Activated CD4-positive, alpha-beta memory T cell treated with anti-CD3 and anti-CD28 coated beads for 36 hours (primary cell): ENCODE measurements at regions of chrX and their contacts with region 1.

Region 1: GRCh38 chrX:115642895-115643530 is 82.0 kb downstream of the PLS3 start:
- DNase-seq: peak; percentile 14
- H3K4me3 Mint-ChIP-seq: no peak overlapping the region
- H3K27ac Mint-ChIP-seq: no peak overlapping the region
- H3K4me1 Mint-ChIP-seq: no peaks in the 10 kb centered on the region
- H3K27me3 Mint-ChIP-seq: peaks cover 2% of the 10 kb centered on the region

Region 2: GRCh38 chrX:115226929-115227328 is 416.1 kb before region 1 on chrX:
- CTCF ChIA-PET with region 1: no interaction called
- POLR2A ChIA-PET with region 1: no interaction called
- intact Hi-C with region 1: loop called (anchors 10 kb)
- DNase-seq: no peak
- H3K4me3 Mint-ChIP-seq: no peak overlapping the region
- H3K27ac Mint-ChIP-seq: no peak overlapping the region
- H3K4me1 Mint-ChIP-seq: no peaks in the 10 kb centered on the region
- H3K27me3 Mint-ChIP-seq: no peaks in the 10 kb centered on the region

Region 3: GRCh38 chrX:115330498-115331168 is 312.4 kb before region 1 on chrX:
- CTCF ChIA-PET with region 1: interaction called, 27 read pairs
- POLR2A ChIA-PET with region 1: no interaction called
- intact Hi-C with region 1: loop called (anchors 1 kb)
- DNase-seq: peak; percentile 9
- H3K4me3 Mint-ChIP-seq: no peak overlapping the region
- H3K27ac Mint-ChIP-seq: no peak overlapping the region
- H3K4me1 Mint-ChIP-seq: no peaks in the 10 kb centered on the region
- H3K27me3 Mint-ChIP-seq: no peaks in the 10 kb centered on the region

Region 4: GRCh38 chrX:115662910-115663309 is 19.9 kb after region 1 on chrX:
- CTCF ChIA-PET with region 1: no interaction called
- POLR2A ChIA-PET with region 1: no interaction called
- intact Hi-C with region 1: no loop called
- DNase-seq: no peak
- H3K4me3 Mint-ChIP-seq: no peak overlapping the region
- H3K27ac Mint-ChIP-seq: no peak overlapping the region
- H3K4me1 Mint-ChIP-seq: no peaks in the 10 kb centered on the region
- H3K27me3 Mint-ChIP-seq: no peaks in the 10 kb centered on the region

Region 5: GRCh38 chrX:115889121-115889890 is 246.3 kb after region 1 on chrX:
- CTCF ChIA-PET with region 1: no interaction called
- POLR2A ChIA-PET with region 1: no interaction called
- intact Hi-C with region 1: no loop called
- DNase-seq: no peak
- H3K4me3 Mint-ChIP-seq: no peak overlapping the region
- H3K27ac Mint-ChIP-seq: no peak overlapping the region
- H3K4me1 Mint-ChIP-seq: no peaks in the 10 kb centered on the region
- H3K27me3 Mint-ChIP-seq: no peaks in the 10 kb centered on the region